ENCODE measurements at regions of chr18 and their contacts with region 1.

Region 1: GRCh38 chr18:1665079-1665478 is 760.4 kb downstream of the ADCYAP1 start:
- DNase-seq: no peak
- ATAC-seq: peak; percentile 47

Region 2: GRCh38 chr18:1732143-1732542 is 67.1 kb after region 1 on chr18:
- intact Hi-C with region 1: no loop called
- DNase-seq: no peak
- ATAC-seq: no peak

Region 3: GRCh38 chr18:1779587-1779986 is 114.5 kb after region 1 on chr18:
- intact Hi-C with region 1: loop called (anchors 5 kb)
- DNase-seq: no peak
- ATAC-seq: peak; percentile 57

Measured in Right ventricle myocardium superior (tissue), 1 donor.